ENCODE measurements at regions of chr12 and their contacts with region 1.

Region 1: DNA sequence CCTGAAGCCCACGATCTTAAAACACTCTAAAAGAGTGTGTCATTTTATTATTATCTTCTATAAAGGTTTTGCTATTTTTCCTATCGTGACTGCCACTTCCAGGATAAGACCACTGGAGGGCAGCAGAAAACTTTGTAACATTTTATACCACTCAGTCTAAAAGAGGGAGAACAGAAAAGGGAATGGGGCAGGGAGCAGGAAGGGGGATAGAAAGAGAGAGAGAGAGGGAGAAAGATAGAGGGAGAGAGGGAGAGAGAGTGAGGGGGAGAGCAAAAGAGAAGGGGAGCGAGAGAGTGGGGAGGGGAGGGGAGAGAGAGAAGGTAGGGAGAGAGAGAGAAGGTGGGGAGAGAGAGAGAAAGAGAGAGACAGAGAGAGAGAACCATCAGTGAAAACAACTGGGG is 2.0 kb upstream of the ART4 start:
- DNase-seq: no peak
- ATAC-seq: peak; percentile 82
- H3K4me3 ChIP-seq: no peak overlapping the region
- H3K27ac ChIP-seq: peak overlapping the region; percentile 39
- H3K4me1 ChIP-seq: peaks cover 40% of the 10 kb centered on the region
- H3K27me3 ChIP-seq: no peaks in the 10 kb centered on the region
- CTCF ChIP-seq: peak; percentile 77

Region 2: DNA sequence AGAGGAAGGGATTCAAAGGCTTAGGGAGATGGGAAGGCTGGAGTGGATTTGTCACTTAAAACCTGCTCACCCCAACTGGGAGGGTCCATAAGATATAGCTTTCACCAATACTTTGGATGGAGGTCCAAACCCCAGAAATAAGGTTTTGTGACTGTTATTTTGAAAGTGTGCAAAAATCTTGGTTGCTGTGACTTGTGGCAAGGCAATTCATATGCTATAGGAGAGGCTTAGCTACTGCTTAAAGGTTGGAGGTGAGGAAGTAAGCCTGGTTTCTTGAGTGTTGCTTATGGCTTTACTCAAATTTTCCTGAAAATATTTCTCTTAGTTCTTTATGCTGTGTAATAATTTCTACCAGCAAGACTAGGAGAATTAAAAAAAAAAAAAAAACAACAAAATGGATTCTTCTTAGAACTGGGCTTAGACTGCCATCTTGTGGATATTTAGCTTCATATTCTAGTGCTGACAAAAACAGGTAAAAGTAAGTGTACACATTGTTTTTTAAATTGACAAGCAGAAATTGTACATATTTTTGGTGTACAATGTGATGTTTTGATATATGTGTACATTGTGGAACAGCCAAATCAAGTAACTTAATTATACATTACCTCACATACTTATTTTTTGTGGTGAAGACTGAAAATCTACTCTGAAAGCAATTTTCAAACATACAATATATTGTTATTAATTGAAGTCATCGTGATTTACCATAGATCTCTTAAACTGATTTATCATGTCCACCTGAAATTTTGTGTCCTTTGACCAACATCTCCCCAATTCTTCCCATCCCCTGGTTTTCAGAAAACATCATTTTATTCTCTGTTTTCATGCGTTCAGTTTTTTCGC is 150.5 kb after region 1 on chr12:
- intact Hi-C with region 1: loop called (anchors 5 kb)
- DNase-seq: no peak
- ATAC-seq: peak; percentile 73
- H3K4me3 ChIP-seq: no peak overlapping the region
- H3K27ac ChIP-seq: no peak overlapping the region
- H3K4me1 ChIP-seq: peaks cover 17% of the 10 kb centered on the region
- H3K27me3 ChIP-seq: no peaks in the 10 kb centered on the region
- CTCF ChIP-seq: peak; percentile 69

Region 3: GRCh38 chr12:15220994-15221885 is 375.9 kb after region 1 on chr12 and contains the start of gene RERG:
- intact Hi-C with region 1: no loop called
- DNase-seq: peak; percentile 89
- ATAC-seq: peak; percentile 100
- H3K4me3 ChIP-seq: peak within 1 kb of the TSS; percentile 54
- H3K27ac ChIP-seq: peak within 1 kb of the TSS; percentile 82
- H3K4me1 ChIP-seq: no peaks in the 10 kb centered on the region
- H3K27me3 ChIP-seq: no peaks in the 10 kb centered on the region
- CTCF ChIP-seq: peak; percentile 97
- total RNA-seq, gene RERG: 19.6 TPM